Heart left ventricle (tissue), 16 donors: ENCODE measurements at regions of chr18 and their contacts with region 1.

Region 1: GRCh38 chr18:37975446-37975845 is 409.8 kb upstream of the CELF4 start:
- DNase-seq: no peak
- ATAC-seq: no peak
- H3K4me3 ChIP-seq: no peak overlapping the region
- H3K27ac ChIP-seq: no peak overlapping the region
- H3K4me1 ChIP-seq: no peaks in the 10 kb centered on the region
- H3K27me3 ChIP-seq: no peaks in the 10 kb centered on the region
- CTCF ChIP-seq: no peak
- POLR2A ChIP-seq: no peak

Region 2: GRCh38 chr18:38033282-38033681 is 57.8 kb after region 1 on chr18:
- intact Hi-C with region 1: loop called in 1 of 10 experiments (anchors 10 kb)
- DNase-seq: no peak
- ATAC-seq: no peak
- H3K4me3 ChIP-seq: no peak overlapping the region
- H3K27ac ChIP-seq: no peak overlapping the region
- H3K4me1 ChIP-seq: no peaks in the 10 kb centered on the region
- H3K27me3 ChIP-seq: peaks cover 0 to 6% (median 0%) of the 10 kb centered on the region in 9 donors
- CTCF ChIP-seq: no peak
- POLR2A ChIP-seq: no peak